Caco-2 (cell line): ENCODE measurements at regions of chr15 and their contacts with region 1.

Region 1: GRCh38 chr15:40847205-40847961 is 3.5 kb downstream of the SPINT1 start:
- DNase-seq: peak; percentile 90 to 95
- H3K4me3 ChIP-seq: peak overlapping the region; percentile 85
- H3K4me3 Mint-ChIP-seq: peak overlapping the region; percentile 99
- H3K27ac Mint-ChIP-seq: peak overlapping the region; percentile 95
- H3K4me1 ChIP-seq: peaks cover 39% of the 10 kb centered on the region
- H3K4me1 Mint-ChIP-seq: peaks cover 29% of the 10 kb centered on the region
- H3K27me3 ChIP-seq: no peaks in the 10 kb centered on the region
- H3K27me3 Mint-ChIP-seq: no peaks in the 10 kb centered on the region
- CTCF ChIP-seq: no peak

Region 2: DNA sequence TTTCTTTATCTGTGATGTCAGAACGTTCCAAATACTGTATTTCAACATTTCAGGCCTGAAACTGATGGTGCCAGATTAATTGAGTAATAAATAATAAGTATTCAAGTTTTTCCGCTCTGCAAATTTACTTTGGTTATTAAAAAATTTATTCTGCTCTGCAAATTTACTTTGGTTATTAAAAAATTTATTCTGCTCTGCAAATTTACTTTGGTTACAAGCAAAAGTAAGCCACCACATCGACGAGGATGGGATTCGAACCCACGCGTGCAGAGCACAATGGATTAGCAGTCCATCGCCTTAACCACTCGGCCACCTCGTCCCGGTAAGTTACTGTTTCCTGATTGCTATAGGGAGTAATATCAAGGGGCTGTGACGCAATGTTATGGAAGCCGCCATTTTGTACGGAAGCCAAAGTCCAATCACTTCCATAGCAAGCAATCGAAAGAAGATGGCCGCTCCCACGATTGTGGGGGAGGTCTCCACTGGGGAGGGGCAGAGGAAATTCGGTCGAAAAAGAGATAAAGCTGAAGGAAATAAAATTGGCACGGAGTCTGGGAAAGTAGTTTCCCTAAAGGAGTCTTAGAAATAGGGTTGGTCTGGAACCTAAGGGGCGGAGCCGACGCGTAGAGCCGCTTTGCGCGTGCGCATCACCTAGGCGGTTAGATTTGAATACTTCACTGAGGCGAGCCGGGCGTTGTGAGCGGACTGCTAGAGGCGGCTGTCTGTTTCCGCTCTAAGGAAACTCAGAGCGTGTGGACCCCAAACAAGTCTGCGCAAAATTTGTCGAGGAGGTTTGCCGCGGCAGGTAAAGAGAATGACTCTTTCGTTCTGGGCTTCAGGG is 253.6 kb before region 1 on chr15 and contains the start of gene KNL1:
- CTCF ChIA-PET with region 1: no interaction called
- POLR2A ChIA-PET with region 1: no interaction called
- intact Hi-C with region 1: no loop called
- DNase-seq: peak; percentile 89 to 94
- H3K4me3 ChIP-seq: peak within 1 kb of the TSS; percentile 93
- H3K4me3 Mint-ChIP-seq: peak within 1 kb of the TSS; percentile 99
- H3K27ac Mint-ChIP-seq: peak within 1 kb of the TSS; percentile 100
- H3K4me1 ChIP-seq: peaks cover 8% of the 10 kb centered on the region; the same call in 1 of the 2 replicates
- H3K4me1 Mint-ChIP-seq: peaks cover 29% of the 10 kb centered on the region
- H3K27me3 ChIP-seq: no peaks in the 10 kb centered on the region
- H3K27me3 Mint-ChIP-seq: no peaks in the 10 kb centered on the region
- CTCF ChIP-seq: no peak
- total RNA-seq, gene KNL1: 24.8 and 29.5 TPM in 2 replicates

Region 3: DNA sequence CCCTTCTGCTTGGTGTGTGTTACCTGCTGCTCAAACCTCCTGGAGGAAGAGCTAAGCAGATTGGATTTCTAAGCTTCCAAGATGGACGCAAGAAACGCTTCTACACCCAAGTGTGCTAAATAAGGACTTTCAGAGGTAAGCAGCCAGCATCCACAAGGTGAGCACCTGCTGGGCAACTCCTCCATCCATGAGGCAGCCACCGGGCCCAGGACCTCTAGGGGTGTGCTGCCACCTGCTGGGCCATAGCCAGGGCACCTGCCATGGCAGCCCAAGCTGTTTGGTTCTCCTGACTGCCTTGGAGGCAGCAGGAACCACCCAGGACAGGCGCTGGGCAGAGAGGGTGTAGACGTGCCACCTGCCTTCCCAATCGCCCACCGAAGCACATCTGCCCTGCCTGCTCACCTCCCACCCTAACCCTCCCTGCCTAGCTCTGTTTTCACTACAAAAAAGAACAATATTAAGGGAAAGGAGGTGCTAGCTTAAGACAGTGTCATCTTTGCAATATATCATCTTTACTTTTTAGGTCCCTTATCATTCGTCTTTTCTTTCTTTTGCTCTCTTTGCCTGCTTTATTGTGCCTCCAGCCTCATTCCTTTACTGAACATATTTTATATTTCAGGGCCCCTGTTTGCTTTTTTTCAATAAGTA is 64.7 kb before region 1 on chr15:
- CTCF ChIA-PET with region 1: interaction called, 11 read pairs
- POLR2A ChIA-PET with region 1: no interaction called
- intact Hi-C with region 1: no loop called
- DNase-seq: peak; percentile 76 to 88
- H3K4me3 ChIP-seq: no peak overlapping the region
- H3K4me3 Mint-ChIP-seq: no peak overlapping the region
- H3K27ac Mint-ChIP-seq: no peak overlapping the region
- H3K4me1 ChIP-seq: peaks cover 8% of the 10 kb centered on the region
- H3K4me1 Mint-ChIP-seq: peaks cover 8% of the 10 kb centered on the region
- H3K27me3 ChIP-seq: no peaks in the 10 kb centered on the region
- H3K27me3 Mint-ChIP-seq: no peaks in the 10 kb centered on the region
- CTCF ChIP-seq: peak; percentile 81 to 89

Region 4: DNA sequence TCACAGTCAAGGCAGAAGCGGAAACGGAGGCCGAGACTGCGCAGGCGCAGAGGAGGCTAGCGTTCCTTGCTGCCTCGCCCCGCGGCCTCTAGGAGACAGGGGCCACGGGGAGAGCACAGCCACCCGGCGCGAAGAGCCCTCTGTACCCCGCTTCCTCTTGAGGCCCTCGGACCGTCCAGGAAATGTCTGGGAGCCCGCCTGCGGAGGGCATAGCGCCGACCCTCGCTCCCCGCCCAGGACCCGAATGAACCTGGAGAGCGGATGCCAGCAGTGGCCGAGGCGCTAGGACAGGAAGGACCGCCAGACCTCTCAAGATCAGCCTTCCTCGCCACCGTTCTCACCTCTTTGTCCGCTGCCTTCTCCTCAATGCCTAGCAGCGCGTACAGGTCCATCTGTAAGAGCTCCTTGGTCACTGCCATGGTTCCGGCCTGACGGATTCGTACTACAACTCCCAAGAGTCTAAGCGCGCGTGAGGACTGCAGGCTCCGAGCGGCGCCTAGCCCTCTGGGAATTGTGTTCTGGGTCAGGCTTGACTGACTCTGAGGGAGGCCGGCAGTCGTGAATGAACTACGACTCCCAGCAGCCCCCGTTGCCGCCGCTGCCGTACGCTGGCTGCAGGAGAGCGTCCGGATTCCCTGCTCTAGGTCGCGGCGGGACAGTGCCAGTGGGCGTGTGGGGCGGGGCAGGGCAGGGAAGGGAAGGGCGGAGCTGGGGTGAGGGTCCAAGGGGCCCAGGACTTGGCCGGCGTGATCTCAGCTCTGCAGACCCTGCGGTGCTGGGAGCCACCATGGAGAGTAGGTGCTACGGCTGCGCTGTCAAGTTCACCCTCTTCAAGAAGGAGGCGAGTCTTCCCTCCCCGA is 40.1 kb before region 1 on chr15 and contains the starts of genes DNAJC17 and ZFYVE19:
- CTCF ChIA-PET with region 1: interaction called, 8 read pairs
- POLR2A ChIA-PET with region 1: interaction called, 23 read pairs
- intact Hi-C with region 1: loop called (anchors 1 kb)
- DNase-seq: peak; percentile 96 to 97
- H3K4me3 ChIP-seq: peak within 1 kb of the TSS; percentile 88
- H3K4me3 Mint-ChIP-seq: peak within 1 kb of the TSS; percentile 95
- H3K27ac Mint-ChIP-seq: peak within 1 kb of the TSS; percentile 94
- H3K4me1 ChIP-seq: 0 out of 2 replicates have a peak, but pooled peaks cover 4% of the 10 kb centered on the region
- H3K4me1 Mint-ChIP-seq: no peaks in the 10 kb centered on the region
- H3K27me3 ChIP-seq: no peaks in the 10 kb centered on the region
- H3K27me3 Mint-ChIP-seq: no peaks in the 10 kb centered on the region
- CTCF ChIP-seq: no peak
- total RNA-seq, gene DNAJC17: 26.3 and 30.1 TPM in 2 replicates
- total RNA-seq, gene ZFYVE19: 26.7 and 26.9 TPM in 2 replicates

Region 5: DNA sequence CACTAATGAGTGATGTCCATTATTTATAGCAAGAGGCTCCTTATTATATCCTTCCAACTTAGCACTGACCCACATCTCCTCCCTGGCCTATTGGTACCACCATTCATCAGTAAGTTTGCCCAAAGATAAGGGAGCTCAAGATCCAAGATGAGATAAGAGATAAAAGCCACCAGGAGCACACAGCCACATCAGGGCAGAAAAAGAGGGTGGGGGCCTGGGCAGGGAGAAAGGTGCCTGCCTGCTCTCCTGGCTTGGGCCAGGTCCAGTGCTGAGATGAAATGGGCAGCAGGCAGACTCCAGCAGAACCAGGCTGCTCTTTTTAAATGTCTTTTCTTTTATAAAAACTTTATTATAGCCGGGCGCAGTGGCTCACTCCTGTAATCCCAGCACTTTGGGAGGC is 14.4 kb before region 1 on chr15:
- CTCF ChIA-PET with region 1: no interaction called
- POLR2A ChIA-PET with region 1: interaction called, 18 read pairs
- intact Hi-C with region 1: no loop called
- DNase-seq: no peak
- H3K4me3 ChIP-seq: no peak overlapping the region
- H3K4me3 Mint-ChIP-seq: no peak overlapping the region
- H3K27ac Mint-ChIP-seq: no peak overlapping the region
- H3K4me1 ChIP-seq: peaks cover 17% of the 10 kb centered on the region
- H3K4me1 Mint-ChIP-seq: peaks cover 7% of the 10 kb centered on the region
- H3K27me3 ChIP-seq: no peaks in the 10 kb centered on the region
- H3K27me3 Mint-ChIP-seq: no peaks in the 10 kb centered on the region
- CTCF ChIP-seq: no peak

Region 6: DNA sequence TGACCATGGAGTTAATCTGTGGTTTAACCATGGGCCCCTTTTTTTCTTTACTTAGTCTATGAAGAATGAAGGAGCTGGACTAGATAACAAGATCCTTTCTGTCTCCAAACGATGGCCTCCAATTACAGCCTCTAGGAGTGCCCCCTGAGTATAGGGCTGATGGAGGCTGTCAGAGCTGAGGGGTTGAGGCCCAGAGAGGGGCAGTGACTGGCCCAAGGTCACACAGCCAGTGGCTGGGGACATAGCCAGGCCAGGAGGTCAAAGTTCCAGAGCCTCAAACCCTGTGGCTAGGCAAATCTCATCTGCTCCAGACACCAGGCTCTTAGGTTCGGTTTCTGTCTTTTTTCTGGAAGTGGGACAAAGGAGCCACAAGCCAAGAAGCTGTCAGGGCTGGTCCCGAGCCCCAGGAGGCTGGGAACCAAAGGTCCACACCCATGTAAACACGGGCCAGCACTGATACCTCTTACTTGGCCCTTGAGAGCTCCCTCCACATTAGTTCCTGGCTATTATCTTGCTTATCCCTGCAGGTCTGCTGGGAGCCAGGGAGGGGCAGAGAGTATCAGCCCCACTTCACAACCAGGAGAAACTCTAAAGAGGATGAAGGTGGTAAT is 16.4 kb after region 1 on chr15:
- CTCF ChIA-PET with region 1: interaction called, 46 read pairs
- POLR2A ChIA-PET with region 1: interaction called, 15 read pairs
- intact Hi-C with region 1: no loop called
- DNase-seq: no peak
- H3K4me3 ChIP-seq: no peak overlapping the region
- H3K4me3 Mint-ChIP-seq: no peak overlapping the region
- H3K27ac Mint-ChIP-seq: no peak overlapping the region
- H3K4me1 ChIP-seq: peaks cover 16% of the 10 kb centered on the region
- H3K4me1 Mint-ChIP-seq: peaks cover 18% of the 10 kb centered on the region
- H3K27me3 ChIP-seq: no peaks in the 10 kb centered on the region
- H3K27me3 Mint-ChIP-seq: no peaks in the 10 kb centered on the region
- CTCF ChIP-seq: no peak

Region 7: DNA sequence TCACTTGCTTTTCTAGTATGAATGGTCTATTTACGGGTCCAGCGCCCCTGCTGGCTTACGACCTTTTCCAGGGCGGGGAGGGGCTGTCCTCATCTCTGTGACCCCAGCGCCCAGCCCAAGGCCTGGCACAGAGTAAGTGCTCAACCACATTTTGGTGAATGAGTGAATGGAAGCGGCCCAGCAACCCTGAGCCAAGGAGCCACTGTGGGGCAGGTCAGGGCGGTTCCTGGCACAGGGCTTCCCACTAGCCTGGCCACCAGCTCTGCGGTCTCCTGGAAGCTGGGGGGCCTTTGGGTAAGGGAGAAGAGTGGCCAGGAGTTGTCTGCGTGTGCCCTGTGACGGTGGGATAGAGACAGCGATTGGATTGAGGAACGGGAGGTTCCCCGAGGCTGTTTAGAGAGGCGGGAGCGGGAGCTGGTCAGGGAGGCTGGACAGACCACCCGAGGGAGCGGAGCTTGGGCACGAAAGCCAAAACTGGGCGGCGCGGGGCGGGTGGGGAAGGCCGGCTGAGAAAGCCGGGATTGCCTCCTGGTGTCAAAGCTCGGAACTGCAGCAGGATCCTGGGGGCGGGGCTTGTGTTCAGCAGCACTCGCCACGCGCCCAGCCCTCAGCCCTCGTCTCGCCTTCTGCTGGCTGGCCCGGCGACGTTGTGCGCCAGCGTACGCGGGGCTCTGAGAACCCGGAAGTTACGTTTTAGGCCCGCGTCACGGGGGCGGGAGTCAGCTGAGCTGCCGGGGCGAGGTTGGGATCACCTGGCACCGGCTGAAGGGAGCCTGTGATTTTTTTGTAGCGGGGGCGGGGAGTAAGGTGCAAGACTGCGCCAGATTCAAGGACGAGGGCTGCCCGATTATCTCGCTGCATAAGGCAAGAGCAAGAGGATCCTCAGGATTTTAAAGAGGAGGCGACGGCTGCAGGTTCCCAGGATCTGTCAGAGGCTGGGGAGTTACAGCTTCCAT is 46.6 kb after region 1 on chr15 and contains the start of gene VPS18:
- CTCF ChIA-PET with region 1: interaction called, 12 read pairs
- POLR2A ChIA-PET with region 1: interaction called, 5 read pairs
- intact Hi-C with region 1: no loop called
- DNase-seq: peak; percentile 97 to 98
- H3K4me3 ChIP-seq: peak within 1 kb of the TSS; percentile 87
- H3K4me3 Mint-ChIP-seq: peak within 1 kb of the TSS; percentile 88
- H3K27ac Mint-ChIP-seq: peak within 1 kb of the TSS; percentile 87
- H3K4me1 ChIP-seq: peaks cover 14% of the 10 kb centered on the region
- H3K4me1 Mint-ChIP-seq: peaks cover 23% of the 10 kb centered on the region
- H3K27me3 ChIP-seq: no peaks in the 10 kb centered on the region
- H3K27me3 Mint-ChIP-seq: no peaks in the 10 kb centered on the region
- CTCF ChIP-seq: peak; percentile 84 to 85
- total RNA-seq, gene VPS18: 27.3 and 29.3 TPM in 2 replicates